ENCODE measurements at regions of chr1 and their contacts with region 1.

Region 1: DNA sequence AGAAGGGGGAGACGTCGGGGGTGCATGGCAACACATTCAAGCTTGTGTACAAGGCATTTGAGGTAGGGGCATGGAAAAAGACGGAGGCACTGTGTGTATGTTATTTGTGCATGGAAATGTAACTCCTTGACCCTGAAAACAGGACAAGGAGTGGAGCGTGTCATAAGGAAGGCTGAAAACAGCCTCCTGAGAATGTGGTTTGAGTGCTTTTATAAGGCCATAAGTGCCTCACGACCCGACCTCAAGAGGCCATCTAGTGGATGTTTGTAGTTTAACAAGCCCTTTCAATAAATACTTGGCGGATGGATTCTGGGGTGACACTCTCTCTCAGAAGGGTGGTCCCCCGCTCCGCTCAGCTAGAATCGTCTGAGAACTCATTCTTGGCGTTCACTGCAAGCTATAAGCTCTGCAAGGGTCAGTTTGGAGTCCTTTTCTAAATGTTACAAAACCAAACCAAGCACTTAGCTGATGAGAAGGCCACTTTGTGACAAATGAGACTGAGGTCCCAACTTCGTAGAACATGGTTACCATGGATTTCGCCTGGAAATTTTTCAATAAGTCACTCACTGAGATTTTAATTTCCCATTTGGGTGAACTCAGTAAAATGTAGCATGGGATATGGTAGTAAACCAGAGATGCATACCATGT is 38.8 kb upstream of the CLCA4 start:
- DNase-seq: no peak
- ATAC-seq: peak; percentile 55
- H3K4me3 ChIP-seq: no peak overlapping the region
- H3K4me1 ChIP-seq: no peaks in the 10 kb centered on the region
- CTCF ChIP-seq: peak; percentile 23

Region 2: GRCh38 chr1:86470859-86471258 is 37.2 kb before region 1 on chr1:
- intact Hi-C with region 1: loop called in 1 of 2 experiments (anchors 5 kb)
- DNase-seq: no peak
- ATAC-seq: no peak
- H3K4me3 ChIP-seq: no peak overlapping the region
- H3K4me1 ChIP-seq: peaks cover 7% of the 10 kb centered on the region
- CTCF ChIP-seq: no peak